SK-N-SH (cell line): ENCODE measurements at regions of chr2 and their contacts with region 1.

Region 1: GRCh38 chr2:201909961-201910361 is 103.6 kb downstream of the CDK15 start:
- DNase-seq: no peak
- H3K4me3 ChIP-seq: 0 out of 4 replicates have a peak overlapping the region, but pooled peaks of 1 of the 2 experiments have one; percentile 16
- H3K27ac ChIP-seq: peak overlapping the region in 1 of 2 experiments; percentile 73; a peak in 2 of 4 replicates
- H3K4me1 ChIP-seq: peaks cover 6 to 18% of the 10 kb centered on the region in 2 experiments; a peak in 3 of 4 replicates
- H3K27me3 ChIP-seq: no peaks in the 10 kb centered on the region
- CTCF ChIP-seq: no peak
- EP300 ChIP-seq: no peak
- RAD21 ChIP-seq: no peak

Region 2: GRCh38 chr2:201880579-201880978 is 29.4 kb before region 1 on chr2:
- CTCF ChIA-PET with region 1: no interaction called
- POLR2A ChIA-PET with region 1: no interaction called
- DNase-seq: no peak
- H3K4me3 ChIP-seq: no peak overlapping the region
- H3K27ac ChIP-seq: peak overlapping the region; percentile 44 to 58; a peak in 3 of 4 replicates
- H3K4me1 ChIP-seq: peaks cover 43 to 44% of the 10 kb centered on the region in 2 experiments
- H3K27me3 ChIP-seq: no peaks in the 10 kb centered on the region
- CTCF ChIP-seq: no peak
- EP300 ChIP-seq: no peak
- RAD21 ChIP-seq: no peak

Region 3: GRCh38 chr2:201891676-201892075 is 18.3 kb before region 1 on chr2:
- CTCF ChIA-PET with region 1: interaction called, 12 read pairs
- POLR2A ChIA-PET with region 1: no interaction called
- DNase-seq: no peak
- H3K4me3 ChIP-seq: no peak overlapping the region
- H3K27ac ChIP-seq: no peak overlapping the region
- H3K4me1 ChIP-seq: peaks cover 18 to 37% of the 10 kb centered on the region in 2 experiments; a peak in 3 of 4 replicates
- H3K27me3 ChIP-seq: no peaks in the 10 kb centered on the region
- CTCF ChIP-seq: no peak
- EP300 ChIP-seq: peak in 1 of 2 experiments; percentile 59; a peak in 1 of 4 replicates
- RAD21 ChIP-seq: no peak

Region 4: GRCh38 chr2:202064171-202064880 is 154.4 kb after region 1 on chr2:
- CTCF ChIA-PET with region 1: no interaction called
- POLR2A ChIA-PET with region 1: no interaction called
- DNase-seq: peak; percentile 27
- H3K4me3 ChIP-seq: peak overlapping the region in 1 of 2 experiments; percentile 27; a peak in 1 of 4 replicates
- H3K27ac ChIP-seq: peak overlapping the region; percentile 83 to 96
- H3K4me1 ChIP-seq: peaks cover 16 to 18% of the 10 kb centered on the region in 2 experiments; a peak in 2 of 4 replicates
- H3K27me3 ChIP-seq: no peaks in the 10 kb centered on the region
- CTCF ChIP-seq: no peak
- EP300 ChIP-seq: peak in 1 of 2 experiments; percentile 42; a peak in 1 of 4 replicates
- RAD21 ChIP-seq: no peak